ENCODE measurements at regions of chr7 and their contacts with region 1.

Region 1: GRCh38 chr7:140175221-140176121 is 1.3 kb downstream of the KDM7A start:
- DNase-seq: peak; percentile 97
- ATAC-seq: peak; percentile 59
- H3K4me3 ChIP-seq: peak overlapping the region; percentile 69 to 89 (median 79)
- H3K4me3 Mint-ChIP-seq: peak overlapping the region; percentile 88
- H3K27ac ChIP-seq: peak overlapping the region; percentile 75 to 93
- H3K27ac Mint-ChIP-seq: peak overlapping the region; percentile 95
- H3K4me1 ChIP-seq: peaks cover 26 to 39% of the 10 kb centered on the region in 2 donors
- H3K4me1 Mint-ChIP-seq: peaks cover 42% of the 10 kb centered on the region
- H3K27me3 ChIP-seq: no peaks in the 10 kb centered on the region
- H3K27me3 Mint-ChIP-seq: no peaks in the 10 kb centered on the region
- CTCF ChIP-seq: peak; percentile 76

Region 2: GRCh38 chr7:139359366-139360209 is 815.9 kb before region 1 on chr7 and contains the start of gene LUC7L2:
- CTCF ChIA-PET with region 1: no interaction called
- POLR2A ChIA-PET with region 1: no interaction called
- intact Hi-C with region 1: loop called (anchors 1 kb)
- DNase-seq: peak; percentile 99
- ATAC-seq: peak; percentile 77
- H3K4me3 ChIP-seq: peak within 1 kb of the TSS; percentile 91 to 96 (median 96)
- H3K4me3 Mint-ChIP-seq: peak within 1 kb of the TSS; percentile 99
- H3K27ac ChIP-seq: peak within 1 kb of the TSS; percentile 98 to 99
- H3K27ac Mint-ChIP-seq: peak within 1 kb of the TSS; percentile 100
- H3K4me1 ChIP-seq: peaks cover 7 to 24% of the 10 kb centered on the region in 2 donors
- H3K4me1 Mint-ChIP-seq: peaks cover 39% of the 10 kb centered on the region
- H3K27me3 ChIP-seq: no peaks in the 10 kb centered on the region
- H3K27me3 Mint-ChIP-seq: no peaks in the 10 kb centered on the region
- CTCF ChIP-seq: no peak
- total RNA-seq, gene LUC7L2: 141 and 142 TPM in 2 replicates

Region 3: GRCh38 chr7:140192620-140193019 is 17.1 kb after region 1 on chr7:
- CTCF ChIA-PET with region 1: interaction called, 3 read pairs
- POLR2A ChIA-PET with region 1: interaction called, 11 read pairs
- intact Hi-C with region 1: no loop called
- DNase-seq: no peak
- ATAC-seq: no peak
- H3K4me3 ChIP-seq: no peak overlapping the region
- H3K4me3 Mint-ChIP-seq: no peak overlapping the region
- H3K27ac ChIP-seq: no peak overlapping the region
- H3K27ac Mint-ChIP-seq: no peak overlapping the region
- H3K4me1 ChIP-seq: no peaks in the 10 kb centered on the region
- H3K4me1 Mint-ChIP-seq: peaks cover 4% of the 10 kb centered on the region
- H3K27me3 ChIP-seq: no peaks in the 10 kb centered on the region
- H3K27me3 Mint-ChIP-seq: peaks cover 4% of the 10 kb centered on the region
- CTCF ChIP-seq: no peak

Region 4: GRCh38 chr7:140304191-140304799 is 128.8 kb after region 1 on chr7:
- CTCF ChIA-PET with region 1: interaction called, 27 read pairs
- POLR2A ChIA-PET with region 1: interaction called, 6 read pairs
- intact Hi-C with region 1: loop called (anchors 1 kb)
- DNase-seq: peak; percentile 81
- ATAC-seq: peak; percentile 92
- H3K4me3 ChIP-seq: no peak overlapping the region
- H3K4me3 Mint-ChIP-seq: peak overlapping the region; percentile 63
- H3K27ac ChIP-seq: peak overlapping the region; percentile 49 to 58
- H3K27ac Mint-ChIP-seq: peak overlapping the region; percentile 96
- H3K4me1 ChIP-seq: peaks cover 6 to 11% of the 10 kb centered on the region in 2 donors
- H3K4me1 Mint-ChIP-seq: peaks cover 7% of the 10 kb centered on the region
- H3K27me3 ChIP-seq: peaks cover 0 to 3% (median 0%) of the 10 kb centered on the region in 4 experiments
- H3K27me3 Mint-ChIP-seq: peaks cover 6% of the 10 kb centered on the region
- CTCF ChIP-seq: peak; percentile 81

Region 5: DNA sequence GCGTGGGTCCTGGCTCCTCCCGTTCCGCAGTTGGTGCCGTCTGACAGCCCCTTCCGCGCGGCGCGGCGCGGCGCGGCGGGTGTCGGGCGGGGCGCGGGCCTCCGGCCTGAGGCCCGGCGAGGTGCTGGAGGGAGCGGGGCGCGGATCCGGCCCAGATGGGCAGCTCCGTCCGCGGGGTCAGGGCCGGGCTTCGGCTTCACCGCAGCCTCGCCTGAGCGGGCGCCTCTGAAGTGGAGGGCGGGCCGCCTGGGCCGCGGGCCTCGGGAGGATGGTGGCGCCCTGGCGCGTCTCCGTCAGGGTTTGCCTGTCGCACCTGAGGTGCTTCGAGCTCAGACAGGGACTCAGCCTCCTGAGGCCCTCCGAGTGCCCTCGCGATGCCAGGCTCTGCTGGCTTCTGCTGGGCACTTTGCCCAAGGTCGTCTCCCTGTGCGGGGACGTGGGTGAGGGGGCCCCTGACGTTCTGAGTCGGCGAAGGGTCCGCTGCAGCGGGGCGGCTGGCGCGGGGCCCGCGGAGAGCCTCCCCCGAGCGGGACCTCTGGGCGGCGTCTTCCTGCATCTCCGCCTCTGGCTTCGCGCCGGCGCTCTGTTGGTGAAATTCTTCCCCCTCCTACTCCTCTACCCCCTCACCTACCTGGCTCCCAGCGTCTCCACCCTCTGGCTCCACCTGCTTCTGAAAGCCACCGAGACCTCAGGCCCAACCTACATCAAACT is 497.7 kb after region 1 on chr7:
- CTCF ChIA-PET with region 1: no interaction called
- POLR2A ChIA-PET with region 1: no interaction called
- intact Hi-C with region 1: loop called (anchors 2 kb)
- DNase-seq: peak; percentile 83
- ATAC-seq: peak; percentile 55
- H3K4me3 ChIP-seq: peak overlapping the region; percentile 4 to 76 (median 70)
- H3K4me3 Mint-ChIP-seq: peak overlapping the region; percentile 87
- H3K27ac ChIP-seq: peak overlapping the region; percentile 48 to 79
- H3K27ac Mint-ChIP-seq: peak overlapping the region; percentile 91
- H3K4me1 ChIP-seq: peaks cover 46 to 54% of the 10 kb centered on the region in 2 donors
- H3K4me1 Mint-ChIP-seq: peaks cover 52% of the 10 kb centered on the region
- H3K27me3 ChIP-seq: no peaks in the 10 kb centered on the region
- H3K27me3 Mint-ChIP-seq: no peaks in the 10 kb centered on the region
- CTCF ChIP-seq: no peak